Caco-2 (cell line): ENCODE measurements at regions of chr5 and their contacts with region 1.

Region 1: GRCh38 chr5:101103874-101104273 is 200.8 kb upstream of the ST8SIA4 start:
- DNase-seq: peak in 1 of 2 experiments; percentile 55
- H3K4me3 ChIP-seq: no peak overlapping the region
- H3K4me3 Mint-ChIP-seq: no peak overlapping the region
- H3K27ac Mint-ChIP-seq: no peak overlapping the region
- H3K4me1 ChIP-seq: peaks cover 19% of the 10 kb centered on the region
- H3K4me1 Mint-ChIP-seq: peaks cover 15% of the 10 kb centered on the region
- H3K27me3 ChIP-seq: no peaks in the 10 kb centered on the region
- H3K27me3 Mint-ChIP-seq: no peaks in the 10 kb centered on the region
- CTCF ChIP-seq: no peak

Region 2: GRCh38 chr5:101067429-101067828 is 36.4 kb before region 1 on chr5:
- CTCF ChIA-PET with region 1: no interaction called
- POLR2A ChIA-PET with region 1: no interaction called
- intact Hi-C with region 1: loop called (anchors 2 kb)
- DNase-seq: peak in 1 of 2 experiments; percentile 7
- H3K4me3 ChIP-seq: no peak overlapping the region
- H3K4me3 Mint-ChIP-seq: no peak overlapping the region
- H3K27ac Mint-ChIP-seq: no peak overlapping the region
- H3K4me1 ChIP-seq: peaks cover 12% of the 10 kb centered on the region; the same call in 1 of the 2 replicates
- H3K4me1 Mint-ChIP-seq: peaks cover 10% of the 10 kb centered on the region
- H3K27me3 ChIP-seq: no peaks in the 10 kb centered on the region
- H3K27me3 Mint-ChIP-seq: no peaks in the 10 kb centered on the region
- CTCF ChIP-seq: no peak

Region 3: GRCh38 chr5:101663554-101663953 is 559.7 kb after region 1 on chr5:
- CTCF ChIA-PET with region 1: no interaction called
- POLR2A ChIA-PET with region 1: no interaction called
- intact Hi-C with region 1: no loop called
- DNase-seq: no peak
- H3K4me3 ChIP-seq: no peak overlapping the region
- H3K4me3 Mint-ChIP-seq: peak overlapping the region; percentile 45
- H3K27ac Mint-ChIP-seq: peak overlapping the region; percentile 84
- H3K4me1 ChIP-seq: peaks cover 53% of the 10 kb centered on the region
- H3K4me1 Mint-ChIP-seq: peaks cover 28% of the 10 kb centered on the region
- H3K27me3 ChIP-seq: no peaks in the 10 kb centered on the region
- H3K27me3 Mint-ChIP-seq: no peaks in the 10 kb centered on the region
- CTCF ChIP-seq: no peak